ENCODE measurements at regions of chr1 and their contacts with region 1.

Region 1: DNA sequence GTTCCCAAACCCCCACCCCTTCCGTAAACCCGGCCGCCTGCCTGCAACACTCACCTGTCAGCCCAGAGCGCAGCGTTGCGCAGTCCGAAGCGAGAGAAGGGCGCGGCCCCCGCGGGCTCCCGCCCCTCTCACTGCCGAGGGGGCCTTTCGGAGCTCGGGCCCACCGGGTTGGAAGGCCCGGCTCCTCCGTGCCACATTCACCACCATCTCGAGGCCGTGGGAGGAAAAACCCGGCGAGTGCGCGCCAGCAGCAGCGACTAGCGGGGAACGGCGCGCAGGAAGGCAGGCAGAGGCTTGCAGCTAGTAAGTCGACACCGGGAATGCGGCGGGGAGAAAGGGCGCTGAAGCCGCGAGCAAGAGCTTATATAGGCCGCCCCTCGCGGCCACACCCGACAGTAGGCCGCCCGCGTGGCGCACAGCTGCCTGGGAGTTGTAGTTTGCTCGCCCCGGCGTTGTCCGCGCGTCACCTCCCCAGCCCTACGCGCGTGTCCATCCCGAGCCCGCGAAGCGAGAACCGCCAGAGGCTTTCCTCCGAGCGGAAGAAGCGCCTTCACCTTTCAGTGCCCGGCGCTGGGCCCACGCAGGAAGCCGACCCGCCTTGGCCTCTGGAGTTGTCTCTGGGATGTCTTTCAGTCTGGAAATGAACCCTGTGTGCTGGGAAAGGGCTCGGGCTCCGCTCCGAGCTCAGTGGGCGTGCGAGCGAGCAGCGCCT is 10.4 kb upstream of the RAB42 start:
- DNase-seq: peak; percentile 96

Region 2: DNA sequence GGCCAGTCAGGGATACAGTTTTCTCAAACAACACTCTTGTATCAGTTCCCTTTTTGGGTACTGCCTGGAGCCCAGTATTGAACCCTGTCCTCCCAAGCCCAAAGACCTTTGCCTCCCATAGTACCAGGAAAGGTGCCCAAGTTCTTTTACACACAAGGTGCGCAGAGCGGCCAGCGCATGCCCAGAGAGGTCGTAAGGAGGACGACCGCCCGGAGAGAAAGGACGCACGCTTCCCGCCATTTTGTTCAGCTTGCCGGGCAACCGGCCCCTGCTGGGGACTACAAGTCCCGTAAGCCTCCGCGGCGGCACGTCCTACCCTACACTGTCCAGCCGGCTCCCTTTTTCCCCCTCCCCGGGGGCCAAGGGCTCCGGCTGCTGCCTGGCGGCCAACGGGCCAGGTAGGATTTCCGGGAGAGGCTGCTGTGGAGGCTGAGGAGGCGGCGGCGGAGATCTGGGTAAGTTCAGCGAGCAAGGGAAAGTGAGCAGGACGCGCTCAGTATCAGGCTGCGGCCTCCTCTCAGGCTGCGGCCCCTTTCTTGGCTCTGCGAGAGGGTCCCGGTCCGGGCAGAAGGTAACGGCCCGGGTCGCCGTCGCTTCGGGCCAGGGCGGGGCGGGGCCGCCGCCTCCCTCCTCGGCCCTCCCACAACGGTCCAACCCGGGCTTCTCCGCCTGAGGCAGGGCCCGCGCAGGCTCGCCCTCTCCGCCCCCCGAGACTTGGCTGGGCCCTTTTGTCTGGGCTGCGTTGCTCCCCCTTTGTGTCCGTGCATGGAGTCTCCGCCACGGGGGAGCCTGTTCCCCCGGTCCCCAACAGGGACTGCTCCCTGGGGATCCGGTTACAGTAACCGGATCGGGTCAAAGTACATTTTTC is 212.1 kb before region 1 on chr1 and contains the start of gene PHACTR4:
- intact Hi-C with region 1: loop called (anchors 5 kb)
- DNase-seq: peak; percentile 95
- total RNA-seq, gene PHACTR4: 18.0 TPM

Region 3: DNA sequence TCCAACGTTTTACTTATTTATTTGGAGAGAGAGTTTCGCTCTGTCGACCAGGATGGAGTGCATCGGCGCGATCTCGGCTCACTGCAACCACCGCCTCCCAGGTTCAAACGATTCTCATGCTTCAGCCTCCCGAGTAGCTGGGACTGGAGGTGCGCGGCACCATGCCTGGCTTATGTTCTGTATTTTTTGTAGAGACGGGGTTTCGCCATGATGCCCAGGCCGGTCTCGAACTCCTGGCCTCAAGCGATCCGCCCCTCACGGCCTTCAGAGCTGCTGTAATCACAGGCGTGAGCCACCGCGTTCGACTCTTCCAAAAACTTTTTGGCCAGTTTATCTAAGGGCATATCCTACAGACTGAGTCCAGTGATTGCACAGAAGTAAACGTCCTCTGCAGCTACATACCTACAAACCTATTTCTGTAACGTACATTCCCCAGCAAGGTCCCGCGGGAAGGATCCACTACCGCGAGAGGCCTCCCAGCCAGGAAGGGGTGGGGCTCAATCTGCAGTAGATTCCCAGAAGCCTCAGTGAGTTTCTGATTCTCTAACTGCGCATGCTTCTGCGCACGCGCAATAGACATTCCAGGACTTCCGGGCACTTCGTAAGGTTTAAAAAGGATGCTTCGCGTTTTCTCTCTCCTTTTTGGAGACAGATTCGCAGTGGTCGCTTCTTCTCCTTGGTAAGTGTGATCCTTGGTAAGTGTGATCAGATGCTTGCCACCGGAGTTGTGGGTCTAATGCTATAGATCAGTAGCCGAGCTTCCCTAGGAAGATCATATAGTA is 76.1 kb before region 1 on chr1 and contains the start of gene RCC1:
- intact Hi-C with region 1: loop called (anchors 2 kb)
- DNase-seq: peak; percentile 97
- total RNA-seq, gene RCC1: 4.1 TPM

Region 4: GRCh38 chr1:28518000-28518744 is 63.5 kb before region 1 on chr1:
- intact Hi-C with region 1: loop called (anchors 1 kb)
- DNase-seq: peak; percentile 96

Region 5: GRCh38 chr1:28552758-28553663 is 28.7 kb before region 1 on chr1 and contains the start of gene TRNAU1AP:
- intact Hi-C with region 1: loop called (anchors 2 kb)
- DNase-seq: peak; percentile 98
- total RNA-seq, gene TRNAU1AP: 17.6 TPM

Region 6: GRCh38 chr1:28668191-28668955 is 86.7 kb after region 1 on chr1 and contains the start of gene GMEB1:
- intact Hi-C with region 1: loop called (anchors 5 kb)
- DNase-seq: peak; percentile 94
- total RNA-seq, gene GMEB1: 8.2 TPM

Measured in cardiac septum (tissue), 1 donor.